H1 (cell line): ENCODE measurements at regions of chr11 and their contacts with region 1.

Region 1: GRCh38 chr11:134261626-134262488 is 8.5 kb downstream of the ACAD8 start:
- DNase-seq: peak in 1 of 2 experiments; percentile 72
- H3K4me3 ChIP-seq: no peak overlapping the region
- H3K27ac ChIP-seq: no peak overlapping the region
- H3K4me1 ChIP-seq: peaks cover 0 to 2% (median under 1%) of the 10 kb centered on the region in 4 experiments; a peak in 5 of 7 replicates
- H3K27me3 ChIP-seq: no peaks in the 10 kb centered on the region
- CTCF ChIP-seq: peak; percentile 70 to 86 (median 76)
- EP300 ChIP-seq: no peak
- POLR2A ChIP-seq: no peak
- RAD21 ChIP-seq: peak; percentile 70 to 80

Region 2: GRCh38 chr11:134215836-134216235 is 46.0 kb before region 1 on chr11:
- CTCF ChIA-PET with region 1: no interaction called
- POLR2A ChIA-PET with region 1: no interaction called
- DNase-seq: no peak
- H3K4me3 ChIP-seq: no peak overlapping the region
- H3K27ac ChIP-seq: no peak overlapping the region
- H3K4me1 ChIP-seq: no peaks in the 10 kb centered on the region
- H3K27me3 ChIP-seq: no peaks in the 10 kb centered on the region
- CTCF ChIP-seq: no peak
- EP300 ChIP-seq: no peak
- POLR2A ChIP-seq: no peak
- RAD21 ChIP-seq: no peak

Region 3: DNA sequence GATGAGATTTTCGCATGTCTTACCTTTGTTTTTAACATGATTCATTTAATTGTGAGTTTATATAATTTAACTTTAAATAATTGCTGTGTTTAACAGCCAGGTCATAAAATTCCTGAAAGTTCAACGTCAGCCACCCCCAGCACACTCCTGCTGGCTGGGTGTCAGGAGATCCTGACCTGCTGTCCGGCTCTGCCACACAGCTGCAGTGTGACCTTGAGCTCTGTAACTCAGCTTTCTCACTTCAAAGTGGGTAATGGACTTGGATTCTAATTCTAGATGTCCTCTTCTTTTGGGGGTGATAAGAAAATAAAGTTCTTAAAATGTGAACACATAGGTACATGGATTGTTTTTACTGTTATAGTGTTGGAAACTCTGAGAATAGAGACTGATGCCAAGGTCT is 26.5 kb before region 1 on chr11:
- CTCF ChIA-PET with region 1: interaction called, 12 read pairs
- POLR2A ChIA-PET with region 1: interaction called, 4 read pairs
- DNase-seq: no peak
- H3K4me3 ChIP-seq: no peak overlapping the region
- H3K27ac ChIP-seq: no peak overlapping the region
- H3K4me1 ChIP-seq: no peaks in the 10 kb centered on the region
- H3K27me3 ChIP-seq: no peaks in the 10 kb centered on the region
- CTCF ChIP-seq: no peak
- EP300 ChIP-seq: no peak
- POLR2A ChIP-seq: no peak
- RAD21 ChIP-seq: no peak

Region 4: GRCh38 chr11:134275534-134276395 is 13.9 kb after region 1 on chr11 and contains the start of gene GLB1L3:
- CTCF ChIA-PET with region 1: interaction called, 114 read pairs
- POLR2A ChIA-PET with region 1: interaction called, 76 read pairs
- DNase-seq: peak in 1 of 2 experiments; percentile 85
- H3K4me3 ChIP-seq: peak within 1 kb of the TSS; percentile 88 to 92 (median 90)
- H3K27ac ChIP-seq: no peak within 1 kb of the TSS
- H3K4me1 ChIP-seq: peaks cover 8 to 17% (median 14%) of the 10 kb centered on the region in 4 experiments
- H3K27me3 ChIP-seq: peaks cover 0 to 7% (median 0%) of the 10 kb centered on the region in 4 experiments; a peak in 3 of 7 replicates
- CTCF ChIP-seq: peak; percentile 34 to 56 (median 44); a peak in 3 of 4 replicates
- EP300 ChIP-seq: no peak
- POLR2A ChIP-seq: no peak; a peak in 1 of 3 replicates
- RAD21 ChIP-seq: peak in 1 of 2 experiments; percentile 10; a peak in 1 of 4 replicates
- total RNA-seq, gene GLB1L3: 32.6 and 33.2 TPM in 2 replicates

Region 5: DNA sequence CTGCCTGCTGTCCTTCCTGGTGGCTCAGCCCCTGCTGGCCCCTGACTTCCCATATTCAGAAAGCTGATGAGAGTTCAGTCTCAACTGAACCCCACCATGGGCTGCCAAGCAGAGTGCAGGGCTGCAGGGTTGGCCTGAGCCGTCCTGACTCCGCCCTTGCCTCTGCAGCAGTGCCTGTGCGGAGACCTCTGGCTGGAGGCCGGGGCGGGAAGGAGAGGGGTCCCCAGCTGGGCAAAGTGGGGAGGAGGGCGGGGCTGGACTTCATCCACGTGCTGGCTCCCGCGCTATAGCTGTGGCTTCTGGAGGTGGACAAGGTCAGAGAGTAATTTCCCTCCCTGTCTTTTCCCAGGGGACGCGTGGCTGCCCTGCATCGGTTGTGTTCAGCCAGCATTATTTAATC is 27.9 kb after region 1 on chr11:
- CTCF ChIA-PET with region 1: interaction called, 26 read pairs
- POLR2A ChIA-PET with region 1: interaction called, 3 read pairs
- DNase-seq: no peak
- H3K4me3 ChIP-seq: no peak overlapping the region
- H3K27ac ChIP-seq: no peak overlapping the region
- H3K4me1 ChIP-seq: no peaks in the 10 kb centered on the region; a peak in 1 of 7 replicates
- H3K27me3 ChIP-seq: no peaks in the 10 kb centered on the region; a peak in 1 of 7 replicates
- CTCF ChIP-seq: no peak
- EP300 ChIP-seq: no peak
- POLR2A ChIP-seq: no peak
- RAD21 ChIP-seq: no peak

Region 6: DNA sequence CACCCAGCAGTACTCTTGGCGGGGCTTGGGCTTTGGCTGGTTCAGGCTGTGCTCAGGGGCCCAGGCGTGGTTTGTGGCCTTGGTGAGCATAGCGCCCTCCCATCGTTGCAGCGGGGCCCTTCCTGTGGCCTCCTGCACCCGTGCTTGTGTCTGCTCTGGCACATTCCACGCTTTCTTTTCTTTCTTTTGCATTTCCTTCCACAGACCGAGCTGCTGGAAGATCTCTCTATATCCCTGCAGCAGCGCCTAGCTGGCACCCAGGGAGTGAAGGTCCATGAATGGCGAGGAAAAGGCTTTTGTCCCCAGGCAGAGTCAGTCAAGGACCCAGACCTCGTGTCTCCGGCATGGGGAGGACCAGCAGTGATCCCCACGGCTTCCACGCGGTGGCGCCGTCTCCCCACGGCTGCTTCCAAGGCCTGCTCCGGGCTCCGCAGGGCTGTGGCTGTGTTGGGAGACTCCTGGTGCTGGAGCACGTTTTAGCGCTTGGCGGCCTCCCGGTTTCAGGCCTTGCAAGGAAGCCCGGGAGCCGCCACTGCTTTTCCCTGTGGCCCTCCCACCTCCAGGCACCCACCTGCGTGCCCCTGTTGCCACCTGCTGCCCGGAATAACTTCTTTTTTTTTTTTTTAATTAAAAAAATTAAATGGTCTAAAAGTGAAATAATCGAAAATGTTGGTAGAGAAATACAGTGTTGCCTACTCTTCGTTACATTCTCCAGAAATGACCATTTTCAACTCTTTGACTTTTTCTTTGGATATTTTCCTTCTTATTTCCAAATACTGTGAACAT is 98.4 kb after region 1 on chr11:
- CTCF ChIA-PET with region 1: interaction called, 10 read pairs
- POLR2A ChIA-PET with region 1: no interaction called
- DNase-seq: peak; percentile 91 to 98
- H3K4me3 ChIP-seq: no peak overlapping the region
- H3K27ac ChIP-seq: no peak overlapping the region
- H3K4me1 ChIP-seq: no peaks in the 10 kb centered on the region; a peak in 1 of 7 replicates
- H3K27me3 ChIP-seq: peaks cover 0 to 15% (median 5%) of the 10 kb centered on the region in 4 experiments; a peak in 6 of 7 replicates
- CTCF ChIP-seq: peak; percentile 97 to 99 (median 99)
- EP300 ChIP-seq: no peak
- POLR2A ChIP-seq: no peak
- RAD21 ChIP-seq: peak; percentile 98 to 100